Activated CD4-positive, alpha-beta memory T cell treated with anti-CD3 and anti-CD28 coated beads, Interleukin-2, amount 10 ng/mL, durations not matched to agents 7 days and 5 days (primary cell): ENCODE measurements at regions of chr12 and their contacts with region 1.

Region 1: DNA sequence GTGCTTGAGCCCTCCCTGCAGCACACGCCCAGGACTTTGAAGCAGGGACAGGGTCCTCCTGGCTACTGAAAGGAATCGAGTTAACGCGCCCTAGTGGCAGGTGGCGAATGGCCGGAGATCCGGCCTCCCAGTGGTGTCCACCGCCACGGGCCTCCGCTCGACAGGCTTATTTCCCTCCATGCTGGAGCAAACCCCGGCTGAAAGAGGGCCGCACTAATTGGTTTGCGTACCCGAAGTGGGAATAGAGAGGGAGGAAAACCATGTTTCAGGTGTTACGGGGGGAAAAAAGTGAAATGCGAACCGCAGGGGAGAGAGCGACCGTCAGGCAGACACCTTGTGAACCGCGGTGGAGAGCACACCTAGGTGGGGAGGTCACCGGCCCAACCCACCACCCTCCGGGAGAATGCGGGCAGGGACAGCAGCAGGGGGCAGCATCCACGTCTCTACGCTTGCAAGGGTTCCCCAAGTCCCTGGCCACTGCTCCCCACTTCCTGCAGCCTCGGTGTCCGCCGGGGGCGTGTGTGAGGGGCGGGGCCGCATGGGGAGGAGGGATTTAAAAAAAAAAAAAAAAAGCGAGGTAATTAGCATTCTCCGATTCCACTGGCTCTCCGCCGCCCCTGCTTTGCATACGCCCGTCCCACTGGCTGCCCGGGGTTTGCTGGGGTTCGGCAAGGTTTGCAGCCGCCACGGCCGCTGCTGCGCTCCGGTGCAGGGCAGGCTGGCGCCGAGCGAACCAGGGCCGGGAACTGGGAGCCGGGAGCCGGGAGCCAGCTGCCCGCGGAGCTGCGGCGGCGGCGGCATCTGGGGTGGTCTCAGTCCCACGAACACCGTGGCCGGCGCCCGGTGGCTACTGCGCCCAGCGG is 224.6 kb upstream of the CRY1 start:
- DNase-seq: peak; percentile 91
- H3K4me3 Mint-ChIP-seq: peak overlapping the region; percentile 76
- H3K27ac Mint-ChIP-seq: peak overlapping the region; percentile 10
- H3K4me1 Mint-ChIP-seq: peaks cover 29% of the 10 kb centered on the region
- H3K27me3 Mint-ChIP-seq: peaks cover 31% of the 10 kb centered on the region

Region 2: GRCh38 chr12:107328442-107329133 is 10.6 kb after region 1 on chr12:
- CTCF ChIA-PET with region 1: interaction called, 4 read pairs
- POLR2A ChIA-PET with region 1: interaction called, 11 read pairs
- DNase-seq: peak; percentile 23
- H3K4me3 Mint-ChIP-seq: no peak overlapping the region
- H3K27ac Mint-ChIP-seq: no peak overlapping the region
- H3K4me1 Mint-ChIP-seq: peaks cover 56% of the 10 kb centered on the region
- H3K27me3 Mint-ChIP-seq: no peaks in the 10 kb centered on the region

Region 3: DNA sequence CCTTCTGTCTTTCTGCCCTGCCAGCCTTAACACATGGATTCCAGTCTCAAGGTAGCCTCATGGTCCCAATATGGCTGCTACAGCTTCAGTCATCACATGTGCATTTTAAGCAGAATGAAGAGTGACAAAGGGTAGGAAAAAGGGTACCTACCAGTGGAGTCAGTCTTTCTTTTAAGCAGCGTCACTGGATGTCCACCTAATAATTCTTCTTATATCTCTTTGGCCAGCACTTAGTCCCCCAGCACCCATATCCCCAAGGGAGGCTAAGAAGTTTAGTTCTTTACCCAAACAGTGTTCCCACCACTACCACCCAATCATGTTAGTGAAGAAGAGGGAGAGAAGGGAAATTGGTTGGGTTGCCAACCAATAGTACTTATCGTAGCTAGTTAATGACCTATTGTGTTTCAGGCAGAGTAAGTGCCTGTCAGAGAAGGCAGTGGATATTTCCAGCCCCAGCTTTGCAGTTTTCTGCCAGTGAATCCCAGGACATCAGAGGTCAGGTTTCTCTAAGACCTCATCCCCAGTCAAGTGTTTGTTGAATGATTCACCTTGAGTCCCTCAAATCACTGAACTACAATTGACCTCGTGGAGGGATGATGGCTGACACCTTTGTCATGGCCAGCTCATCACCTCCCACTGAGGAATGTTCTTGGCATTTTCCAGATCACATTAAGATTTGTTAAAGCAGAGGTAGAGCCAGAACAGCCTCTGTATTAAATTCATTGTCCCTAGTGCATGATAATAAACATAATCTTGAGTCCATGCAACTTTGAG is 26.2 kb after region 1 on chr12:
- CTCF ChIA-PET with region 1: no interaction called
- POLR2A ChIA-PET with region 1: no interaction called
- DNase-seq: no peak
- H3K4me3 Mint-ChIP-seq: no peak overlapping the region
- H3K27ac Mint-ChIP-seq: no peak overlapping the region
- H3K4me1 Mint-ChIP-seq: peaks cover 1% of the 10 kb centered on the region
- H3K27me3 Mint-ChIP-seq: no peaks in the 10 kb centered on the region

Region 4: DNA sequence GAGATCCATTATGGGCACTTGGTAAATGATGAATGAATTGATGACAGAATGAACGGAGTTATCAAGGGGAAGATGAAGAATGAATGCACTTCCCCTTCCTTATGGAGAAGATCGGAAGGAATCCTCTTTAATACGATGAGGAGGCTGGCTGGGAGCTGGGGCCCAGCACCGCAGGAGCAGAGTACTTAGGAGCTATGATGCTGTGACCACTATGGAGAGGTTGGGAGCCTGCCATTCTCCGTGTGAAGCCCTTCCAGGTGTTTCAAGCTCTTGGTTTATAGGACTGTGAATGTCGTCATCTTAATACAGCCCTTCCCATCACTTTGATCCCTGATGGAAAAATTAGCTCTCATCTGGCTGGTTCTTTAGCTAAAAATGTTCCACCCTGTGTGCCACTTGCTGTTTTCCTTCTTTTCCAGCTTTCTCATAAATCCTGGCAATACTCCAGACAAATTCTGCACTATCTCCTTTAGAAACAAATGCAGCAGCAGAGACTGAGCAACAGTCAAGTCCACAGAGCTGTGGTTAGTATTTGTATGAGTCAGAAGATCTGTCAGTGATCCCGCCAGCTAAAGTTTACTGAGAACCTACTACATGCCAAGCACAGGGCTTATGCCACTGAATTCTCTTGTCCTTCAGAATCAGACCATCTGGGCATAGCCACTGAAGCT is 38.4 kb after region 1 on chr12:
- CTCF ChIA-PET with region 1: interaction called, 4 read pairs
- POLR2A ChIA-PET with region 1: interaction called, 22 read pairs
- DNase-seq: no peak
- H3K4me3 Mint-ChIP-seq: no peak overlapping the region
- H3K27ac Mint-ChIP-seq: no peak overlapping the region
- H3K4me1 Mint-ChIP-seq: peaks cover 52% of the 10 kb centered on the region
- H3K27me3 Mint-ChIP-seq: no peaks in the 10 kb centered on the region

Region 5: GRCh38 chr12:107372229-107372658 is 54.3 kb after region 1 on chr12:
- CTCF ChIA-PET with region 1: interaction called, 12 read pairs
- POLR2A ChIA-PET with region 1: interaction called, 173 read pairs
- DNase-seq: peak; percentile 45
- H3K4me3 Mint-ChIP-seq: peak overlapping the region; percentile 31
- H3K27ac Mint-ChIP-seq: peak overlapping the region; percentile 76
- H3K4me1 Mint-ChIP-seq: peaks cover 75% of the 10 kb centered on the region
- H3K27me3 Mint-ChIP-seq: no peaks in the 10 kb centered on the region